ENCODE measurements at regions of chr18 and their contacts with region 1.

Region 1: DNA sequence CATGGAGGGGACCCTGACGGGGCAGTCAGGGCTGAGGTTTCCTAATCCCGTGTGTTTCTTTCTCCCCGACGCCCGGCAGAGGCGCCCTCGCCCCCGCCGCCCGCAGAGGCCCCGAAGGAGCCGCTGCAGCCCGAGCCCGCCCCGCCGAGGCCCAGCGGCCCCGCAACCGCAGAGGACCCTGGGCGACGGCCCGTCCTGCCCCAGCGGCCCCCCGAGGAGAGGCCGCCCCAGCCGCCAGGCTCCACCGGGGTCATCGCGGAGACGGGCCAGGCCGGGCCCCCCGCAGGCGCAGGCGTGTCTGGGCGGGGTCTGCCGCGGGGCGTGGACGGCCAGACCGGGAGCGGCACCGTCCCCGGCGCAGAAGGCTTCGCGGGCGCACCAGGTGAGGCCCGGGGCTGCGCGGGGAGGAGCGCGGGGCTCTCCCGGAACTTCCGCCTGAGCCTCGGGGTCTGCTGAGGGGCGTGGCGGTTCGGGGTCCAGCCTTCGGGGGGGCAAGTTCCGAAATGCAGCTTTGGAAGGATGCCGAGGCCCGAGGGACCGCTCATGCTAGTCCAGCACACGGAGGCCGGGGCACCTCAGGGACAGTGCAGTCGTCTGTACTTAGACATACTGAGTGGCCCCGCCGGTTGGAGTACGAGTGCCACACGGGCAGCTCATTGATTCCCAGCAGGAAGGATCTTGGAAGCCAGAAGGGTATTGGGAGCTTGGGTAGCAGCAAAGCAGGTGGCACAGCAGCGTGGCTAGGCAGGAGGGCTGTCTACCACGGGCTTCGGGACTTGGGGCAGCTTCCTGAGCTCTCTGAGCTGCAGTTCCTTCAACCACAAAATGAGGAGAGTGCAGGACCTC is 60.1 kb downstream of the EMILIN2 start:
- DNase-seq: peak in 3 of 5 donors; percentile 35 to 69 (median 45)
- ATAC-seq: peak in 2 of 4 donors; percentile 27 to 62
- H3K4me3 ChIP-seq: peak overlapping the region; percentile 51 to 79 (median 61)
- H3K27ac ChIP-seq: peak overlapping the region in 11 of 12 donors; percentile 22 to 88 (median 54)
- H3K4me1 ChIP-seq: peaks cover 5 to 52% (median 25%) of the 10 kb centered on the region in 12 donors
- H3K27me3 ChIP-seq: peaks cover 0 to 7% (median 0%) of the 10 kb centered on the region in 9 donors
- CTCF ChIP-seq: peak in 5 of 12 donors; percentile 23 to 39 (median 33)
- POLR2A ChIP-seq: no peak

Region 2: GRCh38 chr18:2741651-2742050 is 165.3 kb before region 1 on chr18:
- intact Hi-C with region 1: no loop called
- DNase-seq: no peak
- ATAC-seq: no peak
- H3K4me3 ChIP-seq: no peak overlapping the region
- H3K27ac ChIP-seq: no peak overlapping the region
- H3K4me1 ChIP-seq: no peaks in the 10 kb centered on the region
- H3K27me3 ChIP-seq: no peaks in the 10 kb centered on the region
- CTCF ChIP-seq: no peak
- POLR2A ChIP-seq: no peak

Region 3: DNA sequence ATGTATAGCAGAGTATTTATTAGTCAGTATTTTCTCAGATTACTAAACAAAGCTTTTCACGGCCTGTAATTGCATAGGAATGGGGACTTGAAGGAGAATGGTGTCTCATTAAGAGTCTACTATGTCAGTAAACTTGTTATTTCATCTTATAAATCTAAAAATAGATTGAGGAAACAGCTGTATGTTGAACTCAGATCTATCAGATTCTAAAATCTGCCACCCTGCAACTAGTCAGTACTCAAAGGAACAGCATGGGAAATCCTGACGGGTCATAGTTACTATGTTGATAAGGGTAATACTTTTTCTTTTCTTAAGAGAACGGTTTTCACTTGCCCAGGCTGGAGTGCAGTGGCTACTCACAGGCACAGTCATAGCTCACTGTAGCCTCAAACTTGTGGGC is 130.3 kb before region 1 on chr18:
- intact Hi-C with region 1: loop called in 3 of 10 experiments (anchors 10 kb)
- DNase-seq: no peak
- ATAC-seq: no peak
- H3K4me3 ChIP-seq: no peak overlapping the region
- H3K27ac ChIP-seq: no peak overlapping the region
- H3K4me1 ChIP-seq: no peaks in the 10 kb centered on the region
- H3K27me3 ChIP-seq: no peaks in the 10 kb centered on the region
- CTCF ChIP-seq: no peak
- POLR2A ChIP-seq: no peak

Region 4: DNA sequence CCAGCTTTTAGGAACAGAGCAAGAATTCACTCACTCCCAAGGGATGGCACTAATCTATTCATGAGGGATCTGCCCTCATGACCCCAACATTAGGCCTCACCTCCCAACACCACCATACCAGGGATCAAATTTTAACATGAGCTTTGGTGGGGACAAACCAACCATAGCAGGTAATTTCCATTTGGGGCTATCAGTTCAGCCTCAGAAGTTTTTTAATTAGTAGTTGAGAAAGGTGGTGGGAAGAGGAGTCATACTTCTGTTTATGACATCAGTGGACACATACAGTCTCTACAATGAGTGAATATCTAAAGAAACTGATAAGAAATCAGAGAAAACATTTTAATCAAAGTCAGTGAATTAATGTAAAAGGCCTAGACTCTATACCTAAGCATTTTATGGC is 119.7 kb before region 1 on chr18:
- intact Hi-C with region 1: loop called in 2 of 10 experiments (anchors 10 kb)
- DNase-seq: no peak
- ATAC-seq: no peak
- H3K4me3 ChIP-seq: no peak overlapping the region
- H3K27ac ChIP-seq: no peak overlapping the region
- H3K4me1 ChIP-seq: no peaks in the 10 kb centered on the region
- H3K27me3 ChIP-seq: no peaks in the 10 kb centered on the region
- CTCF ChIP-seq: no peak
- POLR2A ChIP-seq: no peak

Region 5: DNA sequence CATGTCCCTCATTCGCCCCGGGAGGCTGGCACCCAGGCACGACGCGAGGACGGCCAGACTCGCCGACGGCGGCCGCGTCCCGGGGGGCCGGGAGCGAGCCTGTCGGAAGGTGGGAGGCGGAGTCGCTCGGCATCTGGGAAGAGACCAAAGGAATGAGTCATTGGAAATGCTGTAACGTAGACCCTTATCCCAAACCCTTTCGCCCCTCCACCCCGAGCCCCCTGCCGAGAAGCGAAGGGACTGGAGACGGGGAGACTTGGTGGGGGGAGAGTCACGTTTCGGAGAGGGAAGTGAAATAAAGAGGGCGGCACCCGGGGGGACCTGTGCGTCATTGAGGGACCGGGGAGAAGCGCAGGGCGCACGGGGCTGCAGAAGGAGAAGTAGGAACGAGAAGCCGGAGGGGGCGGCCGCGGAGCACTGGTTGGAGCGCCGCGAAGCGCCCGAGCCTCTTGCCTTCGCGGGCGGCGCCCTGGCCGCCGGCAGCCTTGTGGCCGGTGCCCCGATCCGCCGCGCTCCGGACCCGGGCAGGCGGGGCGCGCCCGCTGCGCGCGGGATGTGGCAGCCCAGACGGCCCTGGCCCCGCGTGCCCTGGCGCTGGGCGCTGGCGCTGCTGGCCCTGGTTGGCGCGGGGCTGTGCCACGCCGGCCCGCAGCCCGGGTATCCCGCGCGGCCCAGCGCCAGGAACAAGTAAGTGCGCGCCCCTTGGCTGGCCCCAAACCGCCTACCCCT is 60.1 kb before region 1 on chr18 and contains the start of gene EMILIN2:
- intact Hi-C with region 1: loop called in 5 of 10 experiments (anchors 2 to 5 kb)
- DNase-seq: peak; percentile 74 to 91 (median 82)
- ATAC-seq: peak in 3 of 4 donors; percentile 44 to 65 (median 45)
- H3K4me3 ChIP-seq: peak within 1 kb of the TSS; percentile 48 to 82 (median 62)
- H3K27ac ChIP-seq: peak within 1 kb of the TSS; percentile 2 to 93 (median 70)
- H3K4me1 ChIP-seq: peaks cover 0 to 50% (median 14%) of the 10 kb centered on the region in 12 donors
- H3K27me3 ChIP-seq: peaks cover 0 to 36% (median 17%) of the 10 kb centered on the region in 9 donors
- CTCF ChIP-seq: no peak
- POLR2A ChIP-seq: no peak
- total RNA-seq, gene EMILIN2: 17.8 to 71.3 (median 22.6) TPM

Region 6: GRCh38 chr18:2857491-2858131 is 49.3 kb before region 1 on chr18:
- intact Hi-C with region 1: loop called in 2 of 10 experiments (anchors 5 kb)
- DNase-seq: peak; percentile 71 to 87 (median 83)
- ATAC-seq: peak; percentile 75 to 96 (median 91)
- H3K4me3 ChIP-seq: peak overlapping the region in 6 of 12 donors; percentile 2 to 18 (median 12)
- H3K27ac ChIP-seq: peak overlapping the region; percentile 15 to 86 (median 75)
- H3K4me1 ChIP-seq: peaks cover 0 to 46% (median 15%) of the 10 kb centered on the region in 12 donors
- H3K27me3 ChIP-seq: no peaks in the 10 kb centered on the region
- CTCF ChIP-seq: no peak
- POLR2A ChIP-seq: peak in 1 of 2 donors; percentile 12